ENCODE measurements at regions of chr5 and their contacts with region 1.

Region 1: DNA sequence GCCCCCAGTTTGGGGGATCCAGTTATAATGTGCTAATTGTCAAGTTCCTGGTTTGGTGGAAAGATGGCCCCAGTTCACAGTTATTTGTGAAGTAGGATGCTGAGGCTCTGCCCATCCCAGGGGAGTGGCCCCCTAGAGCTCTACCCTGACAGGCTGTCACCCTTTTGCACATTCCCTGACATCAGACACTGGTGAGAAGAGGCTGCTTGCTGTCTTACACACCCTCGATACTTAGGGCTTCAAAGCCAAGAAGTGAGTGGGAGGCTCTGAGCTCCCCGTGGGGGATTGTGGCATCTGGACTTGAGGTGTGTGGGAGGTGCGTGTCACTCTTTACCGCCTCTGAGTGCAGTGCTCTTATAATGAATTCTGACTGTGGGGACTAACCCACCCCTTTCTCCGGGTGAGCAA is 168.5 kb downstream of the DOCK2 start:
- DNase-seq: peak; percentile 83
- H3K4me3 Mint-ChIP-seq: peak overlapping the region; percentile 39
- H3K27ac Mint-ChIP-seq: peak overlapping the region; percentile 87
- H3K4me1 Mint-ChIP-seq: peaks cover 57% of the 10 kb centered on the region
- H3K27me3 Mint-ChIP-seq: no peaks in the 10 kb centered on the region

Region 2: GRCh38 chr5:169548315-169548714 is 257.2 kb before region 1 on chr5:
- CTCF ChIA-PET with region 1: no interaction called
- POLR2A ChIA-PET with region 1: no interaction called
- intact Hi-C with region 1: no loop called
- DNase-seq: no peak
- H3K4me3 Mint-ChIP-seq: no peak overlapping the region
- H3K27ac Mint-ChIP-seq: no peak overlapping the region
- H3K4me1 Mint-ChIP-seq: peaks cover 3% of the 10 kb centered on the region
- H3K27me3 Mint-ChIP-seq: peaks cover 50% of the 10 kb centered on the region

Region 3: DNA sequence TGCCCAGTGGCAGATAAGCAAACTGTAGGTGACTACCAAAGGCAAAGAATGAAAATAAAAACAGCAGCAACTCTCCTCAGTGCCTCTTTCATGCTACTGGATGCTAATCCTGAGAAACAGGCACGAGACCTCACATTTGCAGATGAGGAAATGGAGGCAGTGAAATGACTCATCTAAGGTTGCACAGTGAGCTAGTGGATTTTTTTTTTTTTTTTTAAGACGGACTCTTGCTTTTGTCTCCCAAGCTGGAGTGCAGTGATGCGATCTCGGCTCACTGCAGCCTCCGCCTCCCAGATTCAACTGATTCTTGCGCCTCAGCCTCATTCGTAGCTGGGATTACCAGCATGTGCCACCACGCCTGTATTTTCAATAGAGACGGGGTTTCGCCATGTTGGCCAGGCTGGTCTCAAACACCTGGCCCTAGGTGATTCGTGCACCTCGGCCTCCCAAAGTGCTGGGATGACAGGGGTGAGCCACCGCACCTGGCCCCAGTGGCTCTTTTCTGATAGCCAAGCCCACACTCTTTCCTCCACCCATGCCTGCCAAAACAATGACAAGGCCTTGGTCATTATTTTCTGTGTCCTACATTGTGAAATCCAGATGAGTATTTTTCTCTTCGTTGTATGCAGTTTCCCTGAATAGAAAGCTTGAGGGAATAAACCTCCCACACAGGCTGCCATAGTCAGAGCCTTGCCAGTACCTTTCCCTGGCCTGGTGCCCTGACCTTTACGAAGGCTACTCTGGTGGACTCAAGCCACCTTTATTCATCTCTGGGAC is 149.2 kb before region 1 on chr5:
- CTCF ChIA-PET with region 1: no interaction called
- POLR2A ChIA-PET with region 1: interaction called, 4 read pairs
- intact Hi-C with region 1: loop called (anchors 2 kb)
- DNase-seq: peak; percentile 51
- H3K4me3 Mint-ChIP-seq: peak overlapping the region; percentile 29
- H3K27ac Mint-ChIP-seq: peak overlapping the region; percentile 78
- H3K4me1 Mint-ChIP-seq: peaks cover 69% of the 10 kb centered on the region
- H3K27me3 Mint-ChIP-seq: no peaks in the 10 kb centered on the region

Region 4: GRCh38 chr5:169701910-169702451 is 103.5 kb before region 1 on chr5:
- CTCF ChIA-PET with region 1: no interaction called
- POLR2A ChIA-PET with region 1: no interaction called
- intact Hi-C with region 1: loop called (anchors 1 kb)
- DNase-seq: no peak
- H3K4me3 Mint-ChIP-seq: no peak overlapping the region
- H3K27ac Mint-ChIP-seq: peak overlapping the region; percentile 60
- H3K4me1 Mint-ChIP-seq: peaks cover 41% of the 10 kb centered on the region
- H3K27me3 Mint-ChIP-seq: no peaks in the 10 kb centered on the region

Region 5: GRCh38 chr5:169706758-169707691 is 98.5 kb before region 1 on chr5:
- CTCF ChIA-PET with region 1: no interaction called
- POLR2A ChIA-PET with region 1: no interaction called
- intact Hi-C with region 1: loop called (anchors 1 kb)
- DNase-seq: no peak
- H3K4me3 Mint-ChIP-seq: no peak overlapping the region
- H3K27ac Mint-ChIP-seq: peak overlapping the region; percentile 86
- H3K4me1 Mint-ChIP-seq: peaks cover 41% of the 10 kb centered on the region
- H3K27me3 Mint-ChIP-seq: no peaks in the 10 kb centered on the region

Region 6: DNA sequence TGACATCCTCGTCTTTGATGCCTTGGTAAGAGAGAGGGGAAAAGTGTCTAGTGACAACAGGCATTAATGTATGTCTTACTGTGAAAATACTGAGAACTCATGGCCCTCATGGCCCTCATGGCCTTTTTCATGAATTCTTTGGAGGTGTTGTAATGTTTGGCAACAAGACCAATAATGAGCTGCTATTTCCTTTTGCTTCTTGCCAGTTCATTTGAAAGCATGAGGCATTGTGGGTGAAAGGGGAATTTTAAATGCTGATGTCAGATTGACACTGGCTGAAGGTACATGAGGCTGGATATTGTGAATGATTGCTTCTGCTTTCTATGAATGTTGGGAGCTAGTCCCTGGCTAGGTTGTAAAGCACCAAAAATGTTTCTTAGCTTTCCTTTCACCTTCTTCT is 89.3 kb before region 1 on chr5:
- CTCF ChIA-PET with region 1: no interaction called
- POLR2A ChIA-PET with region 1: no interaction called
- intact Hi-C with region 1: loop called (anchors 5 kb)
- DNase-seq: no peak
- H3K4me3 Mint-ChIP-seq: no peak overlapping the region
- H3K27ac Mint-ChIP-seq: peak overlapping the region; percentile 43
- H3K4me1 Mint-ChIP-seq: peaks cover 21% of the 10 kb centered on the region
- H3K27me3 Mint-ChIP-seq: no peaks in the 10 kb centered on the region

Region 7: GRCh38 chr5:169838688-169839087 is 33.2 kb after region 1 on chr5:
- CTCF ChIA-PET with region 1: no interaction called
- POLR2A ChIA-PET with region 1: no interaction called
- intact Hi-C with region 1: no loop called
- DNase-seq: peak; percentile 18
- H3K4me3 Mint-ChIP-seq: no peak overlapping the region
- H3K27ac Mint-ChIP-seq: no peak overlapping the region
- H3K4me1 Mint-ChIP-seq: peaks cover 17% of the 10 kb centered on the region
- H3K27me3 Mint-ChIP-seq: no peaks in the 10 kb centered on the region

Region 8: DNA sequence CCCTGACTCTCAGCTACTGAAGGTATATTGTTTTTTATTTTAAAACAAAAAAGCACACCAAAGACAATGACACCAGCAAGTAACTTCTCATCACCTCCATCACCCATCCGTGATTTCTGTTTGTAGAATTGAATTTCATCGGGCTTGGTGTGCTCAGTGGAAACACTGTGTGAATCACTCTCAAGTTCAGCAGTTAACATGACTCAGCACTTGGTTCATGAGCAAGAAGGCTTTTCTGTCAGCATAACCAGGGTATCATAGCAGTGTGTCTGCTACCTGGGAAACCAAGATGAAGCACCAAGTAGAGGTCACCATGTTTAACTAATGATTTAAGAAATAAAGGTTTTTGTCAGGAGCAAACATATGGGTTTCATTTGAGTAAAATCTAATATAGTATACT is 51.0 kb after region 1 on chr5:
- CTCF ChIA-PET with region 1: no interaction called
- POLR2A ChIA-PET with region 1: no interaction called
- intact Hi-C with region 1: loop called (anchors 1 kb)
- DNase-seq: peak; percentile 18
- H3K4me3 Mint-ChIP-seq: no peak overlapping the region
- H3K27ac Mint-ChIP-seq: peak overlapping the region; percentile 28
- H3K4me1 Mint-ChIP-seq: peaks cover 43% of the 10 kb centered on the region
- H3K27me3 Mint-ChIP-seq: no peaks in the 10 kb centered on the region

Region 9: GRCh38 chr5:169980418-169981053 is 175.0 kb after region 1 on chr5 and contains the start of gene INSYN2B:
- CTCF ChIA-PET with region 1: no interaction called
- POLR2A ChIA-PET with region 1: no interaction called
- intact Hi-C with region 1: loop called (anchors 10 kb)
- DNase-seq: peak; percentile 42
- H3K4me3 Mint-ChIP-seq: no peak within 1 kb of the TSS
- H3K27ac Mint-ChIP-seq: no peak within 1 kb of the TSS
- H3K4me1 Mint-ChIP-seq: no peaks in the 10 kb centered on the region
- H3K27me3 Mint-ChIP-seq: no peaks in the 10 kb centered on the region
- total RNA-seq, gene INSYN2B: not detected

Measured in activated CD4-positive, alpha-beta memory T cell treated with anti-CD3 and anti-CD28 coated beads for 36 hours (primary cell).